ENCODE measurements at regions of chr9 and their contacts with region 1.

Region 1: GRCh38 chr9:137000177-137000883 is 4.0 kb upstream of the CLIC3 start:
- DNase-seq: peak; percentile 84
- ATAC-seq: peak; percentile 81
- H3K4me3 Mint-ChIP-seq: no peak overlapping the region
- H3K27ac Mint-ChIP-seq: peak overlapping the region; percentile 25
- H3K4me1 Mint-ChIP-seq: peaks cover 37% of the 10 kb centered on the region
- H3K27me3 Mint-ChIP-seq: peaks cover 5% of the 10 kb centered on the region
- CTCF ChIP-seq: no peak

Region 2: GRCh38 chr9:136949817-136950655 is 50.3 kb before region 1 on chr9:
- CTCF ChIA-PET with region 1: interaction called, 11 read pairs
- POLR2A ChIA-PET with region 1: interaction called, 3 read pairs
- intact Hi-C with region 1: no loop called
- DNase-seq: peak; percentile 99
- ATAC-seq: peak; percentile 97
- H3K4me3 Mint-ChIP-seq: peak overlapping the region; percentile 82
- H3K27ac Mint-ChIP-seq: peak overlapping the region; percentile 83
- H3K4me1 Mint-ChIP-seq: peaks cover 6% of the 10 kb centered on the region
- H3K27me3 Mint-ChIP-seq: no peaks in the 10 kb centered on the region
- CTCF ChIP-seq: peak; percentile 37

Region 3: DNA sequence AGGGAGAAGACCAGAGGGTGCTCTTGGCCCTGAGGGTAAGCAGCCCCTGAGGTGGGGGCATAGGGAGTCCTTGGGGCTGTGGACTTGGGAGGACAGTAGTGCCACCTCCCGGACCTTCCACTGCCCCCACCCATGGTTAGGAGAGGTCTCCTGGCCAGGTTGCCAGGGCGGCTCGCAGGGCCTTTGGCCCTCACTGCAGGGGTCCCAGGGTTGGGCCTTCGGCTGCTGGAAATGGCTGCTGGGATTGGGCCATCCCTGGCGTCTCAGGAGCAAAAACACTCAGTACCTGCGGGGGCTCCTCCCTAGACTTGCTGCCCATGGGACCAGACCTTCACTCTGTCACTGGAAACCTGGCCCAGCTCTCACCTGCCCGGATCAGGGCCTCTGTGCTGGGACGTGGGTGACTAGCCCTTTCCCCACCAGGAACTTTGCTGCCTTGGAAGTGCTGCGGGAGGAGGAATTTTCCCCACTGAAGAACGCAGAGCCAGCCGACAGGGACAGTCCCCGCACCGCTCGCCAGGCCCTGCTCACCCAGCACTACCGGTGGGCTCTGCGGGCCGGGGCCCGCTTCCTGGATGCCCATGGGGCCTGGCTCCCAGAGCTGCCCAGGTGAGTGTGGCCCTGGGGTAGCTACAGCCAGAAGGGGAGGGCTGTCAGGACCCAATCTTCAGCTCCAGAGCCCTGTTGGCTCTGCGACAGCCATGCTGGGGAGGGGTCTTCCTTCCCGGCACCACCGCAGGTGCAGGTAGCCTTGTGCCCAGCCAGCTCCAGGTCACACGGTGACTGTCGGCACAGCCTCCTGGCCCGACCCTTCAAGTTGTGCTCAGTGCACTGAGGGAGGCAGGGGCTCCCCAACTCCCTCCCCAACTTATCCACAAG is 80.2 kb after region 1 on chr9:
- CTCF ChIA-PET with region 1: no interaction called
- POLR2A ChIA-PET with region 1: no interaction called
- intact Hi-C with region 1: no loop called
- DNase-seq: no peak
- ATAC-seq: no peak
- H3K4me3 Mint-ChIP-seq: peak overlapping the region; percentile 47
- H3K27ac Mint-ChIP-seq: no peak overlapping the region
- H3K4me1 Mint-ChIP-seq: peaks cover 23% of the 10 kb centered on the region
- H3K27me3 Mint-ChIP-seq: no peaks in the 10 kb centered on the region
- CTCF ChIP-seq: no peak

Measured in activated CD8-positive, alpha-beta T cell treated with anti-CD3 and anti-CD28 coated beads for 36 hours (primary cell).